Sigmoid colon (tissue), 7 donors: ENCODE measurements at regions of chr9 and their contacts with region 1.

Region 1: GRCh38 chr9:81609782-81610739 is 79.3 kb downstream of the TLE1 start:
- DNase-seq: no peak
- H3K4me3 ChIP-seq: no peak overlapping the region
- H3K27ac ChIP-seq: peak overlapping the region; percentile 38 to 89 (median 82)
- H3K4me1 ChIP-seq: peaks cover 0 to 48% (median 39%) of the 10 kb centered on the region in 4 donors
- H3K27me3 ChIP-seq: no peaks in the 10 kb centered on the region
- CTCF ChIP-seq: no peak
- EP300 ChIP-seq: no peak
- POLR2A ChIP-seq: no peak

Region 2: DNA sequence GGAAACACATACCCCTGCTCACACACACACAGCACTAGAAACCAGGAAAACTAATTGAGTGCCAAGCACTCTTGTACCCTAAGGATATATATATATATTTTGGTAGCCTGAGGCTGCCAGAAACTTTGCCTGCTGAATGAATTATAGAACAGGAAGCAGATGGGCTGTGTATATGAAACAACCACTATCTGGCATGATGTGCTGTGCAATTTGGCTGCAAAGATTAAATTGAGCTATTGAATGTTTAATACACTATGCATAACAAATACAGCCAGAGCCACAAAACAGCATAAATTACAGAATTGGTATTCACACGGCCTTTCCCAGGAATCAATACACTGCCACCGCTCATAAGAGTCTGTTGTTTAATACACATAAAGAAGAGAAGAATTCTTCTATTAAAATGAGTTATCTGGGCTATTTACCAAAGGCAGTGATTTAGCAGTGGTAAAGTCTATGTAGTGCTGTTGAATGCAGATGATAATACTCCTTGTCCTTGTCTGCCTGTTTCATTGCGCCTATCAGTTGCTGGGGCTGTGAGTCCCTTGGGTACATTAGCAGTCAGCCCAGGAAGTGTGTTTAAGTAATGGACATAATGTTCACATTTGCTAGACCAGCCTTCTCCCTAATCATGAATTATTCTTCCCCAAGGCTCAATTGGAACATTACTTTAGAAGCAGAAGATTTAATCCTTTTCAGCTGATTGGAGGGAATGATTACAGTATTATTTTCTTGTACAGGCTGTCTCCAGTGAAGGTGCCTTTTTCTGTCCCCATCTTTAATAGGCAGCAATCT is 215.0 kb before region 1 on chr9:
- intact Hi-C with region 1: loop called (anchors 5 kb)
- DNase-seq: no peak
- H3K4me3 ChIP-seq: no peak overlapping the region
- H3K27ac ChIP-seq: peak overlapping the region; percentile 52 to 75 (median 71)
- H3K4me1 ChIP-seq: peaks cover 0 to 40% (median 38%) of the 10 kb centered on the region in 4 donors
- H3K27me3 ChIP-seq: no peaks in the 10 kb centered on the region
- CTCF ChIP-seq: no peak
- EP300 ChIP-seq: no peak
- POLR2A ChIP-seq: no peak

Region 3: DNA sequence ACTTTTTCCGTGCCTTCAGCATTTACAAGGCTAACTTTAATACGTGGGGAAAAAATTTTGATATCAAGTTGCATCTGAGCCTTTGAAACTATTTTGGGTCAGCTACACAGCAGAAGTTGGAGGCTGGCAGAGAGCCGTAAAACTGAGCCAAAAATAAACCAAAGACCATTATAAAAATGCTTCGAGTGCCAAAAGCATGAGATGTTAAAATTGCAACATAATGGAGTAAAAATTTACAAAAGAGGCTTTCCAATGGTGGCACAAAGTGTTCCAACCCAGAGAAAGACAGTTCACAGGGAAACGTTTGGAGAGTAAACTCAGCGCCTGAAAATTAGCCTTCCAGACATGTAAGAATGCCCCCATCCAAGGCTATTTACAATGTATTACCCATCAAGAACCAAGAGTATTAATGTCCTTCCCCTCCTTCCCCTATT is 111.0 kb before region 1 on chr9:
- intact Hi-C with region 1: loop called (anchors 5 kb)
- DNase-seq: peak; percentile 75
- H3K4me3 ChIP-seq: no peak overlapping the region
- H3K27ac ChIP-seq: peak overlapping the region; percentile 62 to 82 (median 76)
- H3K4me1 ChIP-seq: peaks cover 0 to 34% (median 23%) of the 10 kb centered on the region in 4 donors
- H3K27me3 ChIP-seq: no peaks in the 10 kb centered on the region
- CTCF ChIP-seq: no peak
- EP300 ChIP-seq: peak; percentile 58 to 92 (median 68)
- POLR2A ChIP-seq: no peak

Region 4: DNA sequence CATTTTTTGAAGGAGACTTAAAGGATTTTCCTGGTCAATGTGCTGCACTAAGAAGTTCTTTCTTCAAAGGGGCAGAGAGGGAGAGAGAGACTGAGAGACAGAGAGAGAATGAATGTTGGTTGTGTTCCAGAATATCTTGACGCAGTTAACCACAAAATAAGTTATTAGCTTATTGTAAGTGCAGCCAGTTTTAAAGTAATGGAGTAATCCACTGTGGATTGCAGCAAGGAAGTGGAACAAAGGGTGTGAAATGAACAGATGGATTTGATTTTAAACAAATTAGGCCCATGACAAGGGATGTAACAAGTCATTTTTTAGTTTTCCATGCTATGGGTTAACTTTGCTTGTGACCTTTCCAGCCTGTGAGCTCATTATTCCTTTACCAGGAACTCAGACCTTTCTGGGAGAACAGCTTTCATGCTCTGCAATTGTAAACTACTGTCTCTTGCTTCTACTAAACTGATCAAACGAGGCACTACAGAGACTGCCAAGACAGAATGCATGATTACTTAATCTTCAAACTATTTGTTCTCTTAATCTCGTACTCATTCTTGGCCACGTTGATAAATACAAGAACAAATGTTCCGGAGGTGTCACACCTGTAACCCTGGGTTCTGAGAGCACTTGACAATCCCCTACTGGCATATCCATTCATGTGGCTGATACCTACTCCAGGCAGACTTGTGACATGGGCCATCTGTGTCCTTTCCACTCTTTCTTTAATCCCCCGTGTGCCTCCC is 51.8 kb before region 1 on chr9:
- intact Hi-C with region 1: loop called (anchors 1 kb)
- DNase-seq: no peak
- H3K4me3 ChIP-seq: no peak overlapping the region
- H3K27ac ChIP-seq: peak overlapping the region; percentile 42 to 70 (median 66)
- H3K4me1 ChIP-seq: peaks cover 0 to 24% (median 16%) of the 10 kb centered on the region in 4 donors
- H3K27me3 ChIP-seq: no peaks in the 10 kb centered on the region
- CTCF ChIP-seq: no peak
- EP300 ChIP-seq: peak in 2 of 4 donors; percentile 25 to 27
- POLR2A ChIP-seq: no peak

Region 5: DNA sequence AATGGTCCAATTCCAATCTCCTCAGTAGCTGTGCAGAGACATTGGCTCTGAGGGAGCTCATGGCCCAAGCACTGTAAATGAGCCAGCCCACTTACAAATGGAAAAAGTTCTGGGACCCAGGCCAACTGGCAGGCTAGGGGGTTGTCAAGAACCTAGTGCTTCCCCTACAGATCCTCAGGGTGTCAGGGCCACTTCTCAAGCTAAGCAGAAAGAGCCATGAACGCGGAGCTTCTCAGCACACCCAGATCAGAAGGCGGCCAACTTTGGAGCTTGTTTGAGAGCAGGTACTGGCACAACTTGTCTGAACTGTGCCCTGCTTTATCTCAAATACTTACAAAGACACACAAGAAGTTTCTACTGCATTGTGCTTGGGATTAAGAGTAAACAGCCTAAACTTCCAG is 61.8 kb after region 1 on chr9:
- intact Hi-C with region 1: loop called (anchors 1 kb)
- DNase-seq: peak; percentile 99
- H3K4me3 ChIP-seq: no peak overlapping the region
- H3K27ac ChIP-seq: peak overlapping the region; percentile 56 to 79 (median 72)
- H3K4me1 ChIP-seq: peaks cover 0 to 51% (median 43%) of the 10 kb centered on the region in 4 donors
- H3K27me3 ChIP-seq: no peaks in the 10 kb centered on the region
- CTCF ChIP-seq: no peak
- EP300 ChIP-seq: peak; percentile 60 to 82 (median 63)
- POLR2A ChIP-seq: no peak

Region 6: DNA sequence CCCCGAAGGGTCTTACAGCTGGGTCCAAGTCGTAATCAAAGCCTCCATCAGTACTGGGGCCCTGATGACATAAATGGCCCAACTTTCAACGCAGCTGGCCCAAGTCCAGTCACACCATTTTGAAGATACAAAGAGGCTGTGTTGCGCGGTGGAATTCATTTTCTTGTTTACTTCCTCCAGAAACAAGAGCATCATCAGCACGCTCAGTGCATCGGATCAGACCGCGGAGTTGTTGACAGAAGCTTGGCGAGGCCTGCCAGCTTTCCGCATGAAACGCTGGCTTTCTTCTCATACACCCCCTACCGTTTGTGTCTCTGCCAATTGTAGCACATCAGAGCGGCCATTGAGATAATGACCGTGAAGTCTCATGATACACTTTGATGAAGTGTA is 216.5 kb after region 1 on chr9:
- intact Hi-C with region 1: loop called (anchors 10 kb)
- DNase-seq: peak; percentile 76
- H3K4me3 ChIP-seq: no peak overlapping the region
- H3K27ac ChIP-seq: peak overlapping the region; percentile 16 to 55 (median 40)
- H3K4me1 ChIP-seq: peaks cover 0 to 46% (median 30%) of the 10 kb centered on the region in 4 donors
- H3K27me3 ChIP-seq: no peaks in the 10 kb centered on the region
- CTCF ChIP-seq: no peak
- EP300 ChIP-seq: no peak
- POLR2A ChIP-seq: no peak